Dendritic cell treated with granulocyte-macrophage colony-stimulating factor and Interleukin-4, amounts not matched to agents 40 ng/mL and 50 ng/mL, for 4 days (primary cell): ENCODE measurements at regions of chr9 and their contacts with region 1.

Region 1: DNA sequence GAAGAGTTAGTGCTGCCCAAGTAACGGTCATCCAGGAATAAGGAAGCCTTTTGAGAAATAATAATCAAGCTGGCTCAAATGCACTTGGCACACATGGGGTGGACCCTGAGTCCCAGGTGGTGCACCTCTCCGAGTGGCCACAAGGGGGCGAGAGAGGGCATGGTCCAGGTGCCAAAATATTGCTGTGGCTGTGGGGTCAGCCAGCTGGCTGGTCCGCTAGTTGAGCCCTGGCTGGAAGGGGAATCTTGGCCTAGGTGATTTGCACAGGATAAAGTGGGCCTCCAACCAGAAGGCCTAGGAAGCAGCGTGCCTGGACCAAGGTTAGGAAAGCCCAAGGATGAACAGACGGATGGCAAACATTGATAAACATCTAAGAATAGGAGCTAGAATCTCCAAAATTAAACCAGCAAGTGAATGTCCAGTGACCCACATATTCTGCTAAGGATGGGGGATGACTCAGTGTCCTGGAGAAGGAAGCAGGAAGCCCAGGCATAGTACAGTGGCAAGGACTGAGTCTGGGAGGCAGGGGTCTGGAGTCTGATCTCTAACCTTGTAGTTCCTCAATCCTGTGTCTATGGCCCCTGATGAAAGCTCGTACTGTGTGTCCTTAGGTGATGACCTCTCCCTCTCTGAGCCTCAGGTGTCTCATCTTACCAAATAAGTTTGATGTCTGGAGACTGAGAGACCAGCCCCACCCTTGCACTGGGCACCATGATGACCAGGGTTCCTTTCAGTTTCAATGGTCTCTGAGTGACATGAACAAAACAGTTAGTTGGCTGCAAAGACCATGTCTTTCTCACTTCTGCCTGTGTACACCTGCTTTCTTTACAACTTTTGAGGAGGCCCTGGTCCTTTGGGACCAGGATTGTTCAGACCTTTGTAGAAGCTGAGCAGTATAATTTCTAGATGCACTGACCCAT is 19.2 kb upstream of the SHB start:
- H3K4me3 Mint-ChIP-seq: no peak overlapping the region
- H3K27ac Mint-ChIP-seq: no peak overlapping the region
- H3K4me1 Mint-ChIP-seq: peaks cover 62% of the 10 kb centered on the region
- H3K27me3 Mint-ChIP-seq: no peaks in the 10 kb centered on the region

Region 2: DNA sequence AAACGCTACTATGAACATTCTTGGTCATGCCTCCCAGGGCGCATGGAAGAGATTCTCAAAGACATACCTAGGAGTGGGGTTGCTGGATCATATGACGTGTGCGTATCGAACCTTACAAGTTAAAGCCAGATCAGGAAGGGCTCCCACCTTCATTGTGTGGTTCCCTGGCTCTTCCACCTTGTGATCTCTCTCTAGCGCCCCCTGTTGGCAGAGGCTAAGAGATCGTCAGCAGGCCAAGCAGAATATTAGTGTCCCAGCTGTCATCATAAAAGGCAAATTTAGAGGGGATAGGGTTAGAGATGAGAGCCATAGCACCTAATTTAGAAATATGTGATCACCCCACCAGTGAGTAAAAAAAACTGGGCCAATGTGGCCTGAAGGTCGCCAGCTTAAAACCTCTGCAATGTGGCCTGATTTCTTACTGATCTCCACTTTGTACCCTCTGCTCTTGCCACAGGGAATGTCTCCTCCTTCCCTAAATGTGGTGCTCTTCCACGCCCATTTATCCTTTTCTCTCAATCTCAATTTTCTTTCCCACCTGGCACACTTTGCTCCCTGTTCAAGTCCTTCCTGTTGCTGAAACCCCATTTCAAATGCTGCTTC is 72.4 kb after region 1 on chr9:
- intact Hi-C with region 1: loop called (anchors 2 kb)
- H3K4me3 Mint-ChIP-seq: no peak overlapping the region
- H3K27ac Mint-ChIP-seq: no peak overlapping the region
- H3K4me1 Mint-ChIP-seq: no peaks in the 10 kb centered on the region
- H3K27me3 Mint-ChIP-seq: peaks cover 7% of the 10 kb centered on the region